AG04450 (cell line): ENCODE measurements at regions of chr10 and their contacts with region 1.

Region 1: GRCh38 chr10:90969947-90970684 is 49.2 kb upstream of the ANKRD1 start:
- DNase-seq: peak; percentile 18
- H3K4me3 ChIP-seq: no peak overlapping the region
- H3K27ac ChIP-seq: no peak overlapping the region
- H3K27me3 ChIP-seq: peaks cover 2% of the 10 kb centered on the region
- CTCF ChIP-seq: no peak

Region 2: DNA sequence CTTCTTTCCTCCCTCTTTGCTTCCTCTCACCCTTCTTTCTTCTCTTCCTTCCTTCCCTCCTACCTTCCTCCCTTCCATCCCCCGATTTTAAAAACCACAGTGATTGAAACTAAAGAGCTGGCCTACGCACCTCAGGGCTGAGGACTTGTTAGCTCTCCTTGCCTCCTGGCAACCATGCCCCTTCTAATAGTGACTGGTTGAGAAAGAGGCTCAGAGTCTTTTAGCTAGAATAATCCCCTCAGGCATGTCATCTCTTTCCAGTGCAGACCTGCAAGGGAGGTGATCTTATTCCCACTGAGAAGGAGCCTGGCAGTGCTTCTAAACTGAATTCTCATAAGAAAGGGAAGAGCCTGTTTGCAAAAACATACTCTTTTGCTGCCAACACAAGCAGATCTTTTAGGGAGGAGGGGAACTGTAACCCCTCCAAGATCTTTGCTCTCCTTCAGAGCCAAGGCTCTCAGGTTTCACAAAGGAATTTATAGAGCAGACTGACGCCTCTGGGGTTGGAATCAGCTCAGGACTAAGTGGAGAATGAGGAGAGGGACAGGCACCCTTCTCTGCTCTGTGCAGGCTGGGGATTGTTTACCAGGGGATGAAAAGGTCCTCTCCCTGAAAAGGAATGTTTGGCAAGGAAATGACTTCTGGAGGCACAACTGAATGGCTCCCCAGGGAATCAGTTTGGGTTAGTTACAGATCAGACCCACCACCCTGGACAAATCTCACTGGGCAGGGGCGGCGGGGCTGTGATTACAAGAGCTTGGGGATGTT is 39.9 kb before region 1 on chr10:
- CTCF ChIA-PET with region 1: no interaction called
- POLR2A ChIA-PET with region 1: interaction called, 15 read pairs
- DNase-seq: peak; percentile 42
- H3K4me3 ChIP-seq: no peak overlapping the region
- H3K27ac ChIP-seq: peak overlapping the region; percentile 89
- H3K27me3 ChIP-seq: no peaks in the 10 kb centered on the region
- CTCF ChIP-seq: no peak